Cardiac septum (tissue), 1 donor: ENCODE measurements at regions of chr4 and their contacts with region 1.

Region 1: GRCh38 chr4:101649790-101650515 is 140.6 kb upstream of the BANK1 start:
- DNase-seq: no peak

Region 2: DNA sequence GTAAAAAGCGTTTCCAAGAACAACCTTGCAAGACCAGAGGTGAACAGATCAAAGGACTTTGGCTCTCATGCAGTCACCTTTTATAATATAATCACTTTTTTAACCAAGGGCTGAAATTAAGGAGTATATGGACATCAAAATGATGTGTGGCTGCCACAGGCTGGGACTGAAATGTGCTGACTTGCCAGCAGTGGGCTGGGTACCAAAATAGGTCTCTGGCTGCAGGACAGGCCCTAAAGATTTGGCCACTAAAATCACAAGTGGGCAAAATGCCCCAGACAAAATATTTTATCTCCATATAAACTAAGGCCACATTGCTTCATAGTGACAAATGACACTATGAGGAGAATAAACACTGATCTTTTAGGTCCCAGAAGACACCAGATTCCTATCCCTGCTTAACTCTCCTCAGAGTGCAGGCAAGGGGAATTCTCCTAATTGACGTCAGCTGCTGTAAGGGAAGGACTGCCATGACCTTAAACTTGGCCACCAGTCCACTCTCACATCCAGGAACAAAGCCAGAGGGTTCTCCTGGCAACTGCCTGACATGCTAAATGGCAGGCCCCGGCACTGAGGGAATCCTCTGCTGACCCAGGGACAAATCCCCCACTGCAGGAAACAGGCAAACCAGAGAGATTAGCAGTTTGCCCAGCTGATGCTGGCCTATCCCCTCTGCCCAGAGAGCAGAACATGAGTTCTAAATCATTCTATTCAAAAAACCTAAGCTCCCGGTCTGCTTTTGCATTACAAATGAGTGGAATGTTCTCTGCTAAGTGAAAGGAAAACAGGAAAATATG is 458.5 kb before region 1 on chr4:
- intact Hi-C with region 1: loop called (anchors 10 kb)
- DNase-seq: peak; percentile 84

Region 3: DNA sequence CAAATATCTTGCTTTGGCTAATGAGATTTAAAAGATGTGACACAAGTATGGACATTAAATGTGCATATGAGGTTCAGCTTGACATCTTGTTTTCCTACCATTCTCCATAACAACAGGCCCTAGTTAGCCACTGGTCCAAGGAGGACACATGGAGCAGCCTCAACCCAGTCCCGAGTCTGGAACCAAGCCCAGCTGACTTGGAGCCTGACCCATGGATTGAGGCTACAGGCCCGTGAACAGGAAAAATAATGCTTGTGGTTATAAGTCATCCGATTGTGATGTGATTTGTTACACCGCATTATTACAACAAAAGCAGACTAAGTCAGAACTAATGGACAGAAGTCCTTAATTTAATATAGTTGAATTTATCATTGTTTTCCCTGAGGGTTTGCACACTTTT is 17.4 kb after region 1 on chr4:
- intact Hi-C with region 1: no loop called
- DNase-seq: no peak

Region 4: GRCh38 chr4:101678153-101678552 is 28.2 kb after region 1 on chr4:
- intact Hi-C with region 1: no loop called
- DNase-seq: no peak